ENCODE measurements at regions of chr12 and their contacts with region 1.

Region 1: DNA sequence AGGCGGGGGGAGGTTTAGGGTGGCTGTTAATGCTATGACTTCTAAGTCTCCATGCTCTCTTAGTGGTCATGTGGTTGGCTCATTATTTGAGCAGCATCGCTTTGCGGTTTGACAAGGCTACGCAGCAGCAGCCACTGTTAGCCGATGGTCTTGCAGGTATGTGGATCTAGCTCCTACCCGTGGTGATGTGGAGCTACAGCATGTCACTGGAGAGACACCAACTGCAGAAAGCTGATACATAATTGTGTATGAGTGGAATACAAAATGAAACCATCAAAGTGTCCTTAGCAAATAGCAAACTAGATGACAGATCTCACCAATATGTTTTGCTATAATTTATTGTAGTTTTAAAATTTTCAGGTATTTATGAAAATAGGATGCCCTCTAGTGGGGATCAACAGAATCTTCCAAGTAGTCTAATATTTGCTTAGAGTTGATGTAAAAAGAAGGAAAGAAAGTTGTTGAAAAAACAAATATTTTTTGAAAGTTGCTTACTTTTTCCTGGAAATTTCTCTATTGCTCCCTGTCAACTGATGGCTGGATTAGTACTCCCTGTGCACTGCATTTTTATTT is 94.9 kb downstream of the NAV3 start:
- DNase-seq: peak; percentile 88
- H3K4me3 ChIP-seq: no peak overlapping the region
- H3K27ac ChIP-seq: no peak overlapping the region
- H3K4me1 ChIP-seq: peaks cover 0 to 8% (median 0%) of the 10 kb centered on the region in 4 donors
- H3K27me3 ChIP-seq: no peaks in the 10 kb centered on the region
- CTCF ChIP-seq: peak; percentile 69 to 81 (median 74)
- EP300 ChIP-seq: no peak
- POLR2A ChIP-seq: no peak

Region 2: GRCh38 chr12:77725611-77726010 is 200.0 kb before region 1 on chr12:
- intact Hi-C with region 1: loop called (anchors 5 kb)
- DNase-seq: no peak
- H3K4me3 ChIP-seq: no peak overlapping the region
- H3K27ac ChIP-seq: no peak overlapping the region
- H3K4me1 ChIP-seq: peaks cover 0 to 13% (median 2%) of the 10 kb centered on the region in 4 donors
- H3K27me3 ChIP-seq: no peaks in the 10 kb centered on the region
- CTCF ChIP-seq: no peak
- EP300 ChIP-seq: no peak
- POLR2A ChIP-seq: no peak

Measured in sigmoid colon (tissue), 7 donors.